Left lung (tissue), 14 donors: ENCODE measurements at regions of chr15 and their contacts with region 1.

Region 1: DNA sequence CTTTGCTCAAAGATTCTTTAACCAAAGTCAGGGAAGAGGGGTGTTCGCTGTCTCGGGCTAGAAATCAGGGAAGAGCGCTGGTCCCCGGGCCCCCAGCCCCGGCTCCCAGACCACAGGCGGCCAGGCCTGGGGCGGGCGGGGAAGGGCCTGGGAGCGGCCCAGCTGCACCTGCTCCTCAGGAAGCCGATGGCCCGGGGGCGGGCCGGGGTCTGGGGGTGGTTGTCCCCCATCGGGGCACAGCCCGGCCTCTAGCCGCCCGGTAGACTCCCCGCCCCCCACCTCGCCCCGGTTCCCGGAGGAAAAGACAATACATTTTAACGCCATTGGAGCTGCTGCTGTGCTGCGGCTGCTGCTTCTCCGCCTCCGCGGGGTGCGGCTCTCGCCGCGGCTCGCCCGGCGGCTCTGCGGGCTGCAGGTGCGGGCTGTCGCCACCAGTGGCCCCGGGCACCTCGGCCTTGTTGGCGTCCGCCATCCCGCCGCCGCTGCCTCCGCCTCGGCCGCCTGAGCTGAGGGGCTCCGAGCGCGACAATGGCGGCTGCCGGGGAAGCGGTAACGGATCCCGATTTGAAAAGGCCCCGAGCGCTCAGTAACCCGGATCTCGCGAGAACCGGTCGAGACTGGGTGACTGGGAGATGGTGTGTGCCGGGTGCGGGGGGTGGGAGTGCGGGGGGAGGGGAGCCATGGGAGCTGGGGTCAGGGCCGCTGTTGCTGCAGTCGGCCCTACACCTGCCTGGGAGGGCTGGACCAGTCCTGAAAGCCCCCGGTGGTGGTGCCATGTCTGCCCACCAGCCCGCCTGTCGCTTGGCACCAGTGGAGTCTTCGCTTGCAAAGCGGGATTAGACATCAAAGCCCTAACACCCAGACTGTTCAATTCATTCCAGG is at the start of gene MYEF2:
- DNase-seq: peak; percentile 34 to 85 (median 68)
- ATAC-seq: peak; percentile 90
- H3K4me3 ChIP-seq: peak within 1 kb of the TSS; percentile 49 to 61
- H3K27ac ChIP-seq: peak within 1 kb of the TSS; percentile 46 to 60
- H3K4me1 ChIP-seq: peaks cover 0 to 8% of the 10 kb centered on the region in 2 donors
- H3K27me3 ChIP-seq: peaks cover 11 to 34% of the 10 kb centered on the region in 2 donors
- CTCF ChIP-seq: no peak
- polyA plus RNA-seq, gene MYEF2: 45.8 to 67.3 (median 54.8) TPM

Region 2: GRCh38 chr15:47139965-47140364 is 1038.0 kb before region 1 on chr15:
- intact Hi-C with region 1: no loop called
- DNase-seq: no peak
- ATAC-seq: no peak
- H3K4me3 ChIP-seq: no peak overlapping the region
- H3K27ac ChIP-seq: no peak overlapping the region
- H3K4me1 ChIP-seq: no peaks in the 10 kb centered on the region
- H3K27me3 ChIP-seq: no peaks in the 10 kb centered on the region
- CTCF ChIP-seq: no peak

Region 3: DNA sequence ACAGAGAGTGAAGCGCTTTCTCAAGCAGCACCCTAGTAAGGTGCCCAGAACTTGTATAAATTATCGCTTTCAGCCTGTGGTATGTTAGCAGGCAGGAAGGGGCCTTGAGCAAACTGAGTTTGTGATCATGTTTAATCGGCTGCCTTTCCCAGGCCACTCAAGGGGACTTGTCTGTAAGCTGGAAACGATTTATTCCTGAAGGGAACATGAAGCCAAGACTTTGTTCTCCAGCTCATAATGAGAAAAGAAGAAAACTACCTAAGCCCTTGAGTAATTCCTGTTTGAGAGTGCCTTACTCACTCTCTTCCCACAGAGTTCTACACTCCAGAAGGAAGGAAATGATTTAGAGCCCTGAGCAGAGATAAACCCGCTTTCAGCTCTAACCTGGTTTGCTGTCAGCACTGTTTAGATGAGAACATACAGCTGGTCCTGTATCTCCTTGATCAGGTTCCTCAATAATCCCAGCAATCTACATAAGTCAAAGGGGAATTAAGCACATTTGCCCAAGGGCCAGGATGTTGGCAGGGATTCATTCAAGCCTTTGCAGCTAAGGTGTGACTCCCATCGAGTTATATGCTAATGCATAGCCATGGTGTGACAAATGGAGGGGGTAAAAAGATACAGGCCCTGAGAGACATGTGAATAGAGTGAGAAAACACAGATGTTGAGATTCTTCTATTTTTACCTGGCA is 244.9 kb before region 1 on chr15:
- intact Hi-C with region 1: no loop called
- DNase-seq: no peak
- ATAC-seq: no peak
- H3K4me3 ChIP-seq: no peak overlapping the region
- H3K27ac ChIP-seq: no peak overlapping the region
- H3K4me1 ChIP-seq: no peaks in the 10 kb centered on the region
- H3K27me3 ChIP-seq: no peaks in the 10 kb centered on the region
- CTCF ChIP-seq: no peak

Region 4: DNA sequence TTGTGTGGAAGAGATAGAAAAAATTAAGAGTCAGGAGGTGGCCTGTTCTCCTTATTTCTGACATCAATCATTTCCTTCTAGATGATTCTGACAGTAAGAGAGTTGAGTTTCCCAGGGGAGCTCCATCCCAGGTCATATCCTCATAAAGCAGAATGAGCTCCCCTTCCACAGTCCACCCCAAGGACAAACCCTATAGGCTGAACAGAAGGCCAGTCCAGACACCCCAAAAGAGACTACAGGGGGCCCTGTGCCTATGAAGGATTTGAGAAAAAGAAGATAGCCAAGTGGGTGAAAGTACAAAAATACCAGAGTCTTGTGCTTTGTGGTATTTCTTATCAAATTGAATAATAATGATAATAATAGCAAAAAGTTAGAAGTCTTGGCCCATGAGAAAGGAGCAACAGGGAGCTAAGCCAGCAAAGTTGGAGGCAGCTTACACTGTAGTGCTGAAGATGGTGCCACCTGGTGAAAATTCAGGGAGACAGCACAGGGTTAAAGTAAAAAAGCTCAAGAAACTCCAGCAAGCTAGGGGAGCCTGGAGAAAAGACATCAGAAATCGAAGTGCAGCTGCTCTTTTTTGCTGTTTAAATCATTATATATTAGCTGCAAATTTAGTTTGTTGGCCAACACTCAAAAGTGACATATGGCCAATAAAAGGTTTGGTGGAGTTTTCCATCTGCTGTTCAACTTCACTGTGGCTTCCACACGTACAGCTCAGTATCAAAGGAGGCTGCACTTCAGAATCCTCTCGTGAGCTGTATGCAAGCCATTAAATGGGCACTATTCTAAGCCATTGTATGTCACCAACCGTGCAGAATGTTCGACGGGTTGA is 93.0 kb before region 1 on chr15:
- intact Hi-C with region 1: no loop called
- DNase-seq: peak in 2 of 4 donors; percentile 18 to 55
- ATAC-seq: peak; percentile 84
- H3K4me3 ChIP-seq: no peak overlapping the region
- H3K27ac ChIP-seq: no peak overlapping the region
- H3K4me1 ChIP-seq: no peaks in the 10 kb centered on the region
- H3K27me3 ChIP-seq: no peaks in the 10 kb centered on the region
- CTCF ChIP-seq: peak in 1 of 2 donors; percentile 16

Region 5: DNA sequence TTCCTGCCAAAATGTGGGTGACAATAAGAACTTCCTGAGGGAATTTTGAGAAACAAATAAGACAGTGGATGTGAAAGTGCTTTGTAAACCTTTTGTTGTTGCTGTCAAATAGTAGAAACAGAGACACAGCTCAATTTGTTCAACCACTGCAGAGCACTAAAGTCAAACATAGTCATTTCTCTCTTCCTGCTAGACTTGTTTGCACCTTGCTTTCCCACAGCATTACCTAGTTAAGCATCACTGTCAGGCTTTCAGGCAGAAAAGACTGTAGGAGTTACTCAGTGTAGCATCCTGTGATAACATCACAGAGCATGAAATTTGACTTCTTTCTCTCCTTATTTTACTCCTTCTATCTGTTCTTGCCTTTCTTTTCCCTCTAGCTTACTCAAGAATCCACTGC is 55.2 kb after region 1 on chr15:
- intact Hi-C with region 1: loop called in 1 of 2 experiments (anchors 10 kb)
- DNase-seq: no peak
- ATAC-seq: no peak
- H3K4me3 ChIP-seq: no peak overlapping the region
- H3K27ac ChIP-seq: no peak overlapping the region
- H3K4me1 ChIP-seq: no peaks in the 10 kb centered on the region
- H3K27me3 ChIP-seq: no peaks in the 10 kb centered on the region
- CTCF ChIP-seq: no peak

Region 6: GRCh38 chr15:48433226-48433886 is 255.3 kb after region 1 on chr15:
- intact Hi-C with region 1: no loop called
- DNase-seq: no peak
- ATAC-seq: no peak
- H3K4me3 ChIP-seq: no peak overlapping the region
- H3K27ac ChIP-seq: no peak overlapping the region
- H3K4me1 ChIP-seq: no peaks in the 10 kb centered on the region
- H3K27me3 ChIP-seq: no peaks in the 10 kb centered on the region
- CTCF ChIP-seq: no peak